Prostate gland (tissue), 2 donors: ENCODE measurements at regions of chr1 and their contacts with region 1.

Region 1: DNA sequence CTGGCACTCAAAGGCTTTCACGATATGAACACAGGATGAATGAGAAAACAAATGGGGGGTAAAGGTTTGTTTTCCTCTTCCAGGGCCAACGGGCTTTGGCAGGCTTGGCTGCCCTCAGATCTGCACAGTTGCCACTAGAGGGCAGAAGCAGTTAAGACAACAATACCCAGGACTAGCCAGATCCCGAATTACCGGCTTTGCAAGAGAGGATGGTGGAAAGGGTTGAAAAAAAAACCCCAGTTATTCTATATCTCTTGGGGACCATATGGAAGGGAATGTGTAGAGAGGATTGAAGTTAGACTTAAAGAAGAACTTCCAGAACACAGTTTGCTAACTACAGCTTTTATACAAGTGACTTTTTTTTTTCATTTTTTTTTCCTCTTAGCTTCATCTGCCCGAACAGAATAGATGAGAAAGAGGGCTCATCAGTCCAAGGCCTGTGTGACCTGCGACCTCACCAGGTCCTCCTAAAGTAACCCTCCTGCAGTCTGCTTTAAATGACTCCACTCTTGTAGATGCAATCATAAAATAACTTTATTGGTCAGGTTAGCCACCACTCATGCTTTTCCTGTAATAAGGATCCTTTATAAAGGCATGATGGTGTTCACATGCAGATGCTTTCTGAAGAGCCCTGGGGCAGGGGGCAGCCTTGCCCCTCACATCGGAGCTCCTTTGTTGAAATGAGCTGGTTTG is 10.7 kb downstream of the FMOD start:
- DNase-seq: peak; percentile 85
- H3K4me3 ChIP-seq: no peak overlapping the region
- H3K27ac ChIP-seq: peak overlapping the region; percentile 50 to 62
- H3K4me1 ChIP-seq: peaks cover 8% of the 10 kb centered on the region
- H3K27me3 ChIP-seq: no peaks in the 10 kb centered on the region
- CTCF ChIP-seq: peak; percentile 70 to 97 (median 94)
- POLR2A ChIP-seq: no peak

Region 2: DNA sequence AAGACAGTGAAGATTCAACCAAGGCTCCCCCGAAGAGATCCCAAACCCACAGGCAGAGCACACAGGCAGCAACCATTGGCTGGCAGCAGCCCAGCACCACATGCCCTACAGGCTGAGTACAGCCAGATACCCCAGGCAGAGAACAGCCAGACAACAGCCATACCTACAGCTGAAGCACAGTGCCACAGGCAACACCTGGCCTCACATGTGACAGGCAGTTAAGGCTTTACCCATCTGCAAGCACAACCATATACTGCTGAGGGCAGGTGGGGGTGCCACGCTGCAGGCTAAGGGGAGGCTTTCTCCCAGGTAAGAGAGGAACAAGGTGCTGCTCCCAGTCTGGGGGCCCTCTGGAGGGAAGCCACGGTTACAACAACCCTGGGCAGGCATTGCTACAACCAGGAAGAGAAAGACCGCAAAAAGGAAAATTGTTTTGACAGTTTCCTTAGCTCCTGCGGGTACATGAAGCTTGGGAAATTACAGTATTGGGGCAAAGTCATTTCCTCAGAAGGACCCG is 123.1 kb before region 1 on chr1:
- intact Hi-C with region 1: no loop called
- DNase-seq: no peak
- H3K4me3 ChIP-seq: no peak overlapping the region
- H3K27ac ChIP-seq: no peak overlapping the region
- H3K4me1 ChIP-seq: no peaks in the 10 kb centered on the region
- H3K27me3 ChIP-seq: no peaks in the 10 kb centered on the region
- CTCF ChIP-seq: no peak
- POLR2A ChIP-seq: no peak

Region 3: DNA sequence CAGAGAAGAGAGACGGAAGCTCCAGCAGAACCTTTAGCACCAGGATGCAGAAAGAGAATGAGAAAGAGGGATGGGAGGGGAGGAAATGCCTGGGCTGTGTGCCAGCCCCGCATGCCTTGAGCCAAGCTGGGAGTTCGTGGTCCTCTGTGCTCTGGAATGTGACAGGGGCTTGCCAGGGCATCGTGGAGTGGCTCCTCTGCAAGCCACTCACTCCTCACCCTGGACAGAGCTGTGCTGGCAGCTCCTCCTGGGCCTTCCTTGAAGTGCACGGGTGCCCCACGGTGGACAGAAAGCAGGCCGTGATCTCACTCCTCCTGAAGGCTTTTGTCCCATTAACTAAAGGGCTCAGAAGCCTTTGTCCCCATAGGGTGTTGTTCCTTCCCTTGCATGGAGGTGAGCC is 100.5 kb after region 1 on chr1:
- intact Hi-C with region 1: loop called (anchors 1 kb)
- DNase-seq: peak; percentile 76
- H3K4me3 ChIP-seq: no peak overlapping the region
- H3K27ac ChIP-seq: peak overlapping the region; percentile 13 to 31
- H3K4me1 ChIP-seq: no peaks in the 10 kb centered on the region
- H3K27me3 ChIP-seq: no peaks in the 10 kb centered on the region
- CTCF ChIP-seq: peak; percentile 42 to 88 (median 67)
- POLR2A ChIP-seq: no peak

Region 4: DNA sequence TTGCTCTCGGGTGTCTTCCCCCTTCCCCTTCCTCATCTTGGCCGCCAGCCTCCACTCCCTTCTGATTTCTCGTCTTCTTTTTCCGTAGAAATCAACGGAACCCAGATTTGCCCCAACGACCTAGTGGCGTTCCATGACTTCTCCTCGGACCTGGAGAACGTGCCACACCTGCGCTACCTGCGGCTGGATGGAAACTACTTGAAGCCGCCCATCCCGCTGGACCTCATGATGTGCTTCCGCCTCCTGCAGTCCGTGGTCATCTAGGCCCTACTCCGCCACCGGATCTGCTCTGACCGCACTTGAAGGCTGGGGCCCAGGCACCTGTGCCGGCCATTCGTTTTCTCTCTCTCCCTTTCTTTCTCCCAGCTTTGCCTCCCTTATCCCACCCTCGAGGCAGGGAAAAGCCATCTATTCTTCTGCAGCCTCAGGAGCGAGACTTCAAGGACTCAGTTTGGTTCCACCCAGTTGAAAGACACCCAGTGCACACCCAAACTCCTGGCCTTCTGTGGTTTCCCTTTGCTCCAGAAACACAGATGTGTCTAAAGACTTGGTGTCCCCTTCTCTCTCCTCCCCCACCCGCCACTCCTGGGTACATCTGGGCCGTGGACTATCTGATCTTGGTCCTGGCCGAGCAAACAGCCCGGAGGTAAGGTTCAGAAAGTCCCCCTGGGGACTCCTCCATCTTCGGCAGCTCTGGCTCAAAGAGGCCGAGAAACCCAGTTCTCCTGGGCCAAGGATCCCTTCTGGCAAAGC is 146.5 kb after region 1 on chr1:
- intact Hi-C with region 1: loop called (anchors 1 kb)
- DNase-seq: no peak
- H3K4me3 ChIP-seq: no peak overlapping the region
- H3K27ac ChIP-seq: peak overlapping the region; percentile 64 to 65
- H3K4me1 ChIP-seq: no peaks in the 10 kb centered on the region
- H3K27me3 ChIP-seq: no peaks in the 10 kb centered on the region
- CTCF ChIP-seq: no peak
- POLR2A ChIP-seq: no peak